ENCODE measurements at regions of chr4 and their contacts with region 1.

Region 1: DNA sequence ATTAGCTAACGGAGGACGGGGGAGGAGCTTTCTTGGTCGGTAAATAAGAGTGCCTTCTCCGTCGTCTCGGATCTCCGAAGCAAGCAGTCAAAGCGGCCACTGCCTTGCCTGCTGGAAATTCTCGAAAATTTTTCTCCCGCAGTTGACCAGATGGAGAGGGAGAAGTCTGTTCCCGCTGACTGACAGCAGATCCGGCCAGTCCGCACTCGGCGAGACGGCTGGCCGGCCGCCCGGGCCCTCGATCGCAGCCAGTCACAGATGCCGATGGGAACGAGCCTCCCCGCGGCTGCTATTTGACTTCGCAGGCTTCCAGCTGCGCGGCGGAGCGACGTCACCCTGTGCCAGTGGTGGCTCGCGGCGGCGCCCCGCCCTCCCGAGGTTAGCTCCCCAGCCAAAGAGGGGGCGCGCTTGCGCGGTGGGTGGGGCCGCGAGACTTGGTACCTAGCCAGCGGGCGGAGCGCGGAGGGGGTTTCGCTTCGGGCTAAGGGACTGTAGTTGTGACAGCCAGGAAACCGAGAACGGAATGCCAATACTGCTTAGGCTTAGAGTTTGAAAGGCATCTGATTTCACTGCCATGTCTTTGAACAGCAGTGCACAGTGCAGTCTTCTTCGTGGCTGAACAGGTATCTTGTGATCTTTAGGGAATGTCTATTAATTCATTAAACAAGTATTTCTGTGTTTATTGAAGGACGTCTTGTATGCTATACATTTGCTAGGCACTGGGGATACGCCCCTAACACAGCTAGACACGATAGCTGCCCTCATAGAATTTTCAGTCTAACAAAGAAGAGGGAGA is at the start of gene PPM1K:
- DNase-seq: peak; percentile 99
- ATAC-seq: peak; percentile 80 to 95 (median 86)
- H3K4me3 ChIP-seq: peak within 1 kb of the TSS; percentile 85
- H3K4me3 Mint-ChIP-seq: peak within 1 kb of the TSS; percentile 99
- H3K27ac ChIP-seq: peak within 1 kb of the TSS; percentile 96
- H3K27ac Mint-ChIP-seq: peak within 1 kb of the TSS; percentile 92 to 100
- H3K4me1 ChIP-seq: peaks cover 26% of the 10 kb centered on the region
- H3K4me1 Mint-ChIP-seq: peaks cover 46 to 52% of the 10 kb centered on the region in 2 donors
- H3K27me3 ChIP-seq: no peaks in the 10 kb centered on the region
- H3K27me3 Mint-ChIP-seq: no peaks in the 10 kb centered on the region
- CTCF ChIP-seq: no peak
- total RNA-seq, gene PPM1K: 68.0 to 76.8 (median 74.3) TPM

Region 2: GRCh38 chr4:87220094-87220822 is 1064.4 kb before region 1 on chr4 and contains the start of gene KLHL8:
- intact Hi-C with region 1: loop called (anchors 10 kb)
- DNase-seq: peak; percentile 85 to 93
- ATAC-seq: peak; percentile 90 to 98 (median 92)
- H3K4me3 ChIP-seq: peak within 1 kb of the TSS; percentile 98
- H3K4me3 Mint-ChIP-seq: peak within 1 kb of the TSS; percentile 94
- H3K27ac ChIP-seq: peak within 1 kb of the TSS; percentile 80
- H3K27ac Mint-ChIP-seq: peak within 1 kb of the TSS; percentile 87 to 91
- H3K4me1 ChIP-seq: peaks cover 18% of the 10 kb centered on the region
- H3K4me1 Mint-ChIP-seq: peaks cover 7 to 12% of the 10 kb centered on the region in 2 donors
- H3K27me3 ChIP-seq: no peaks in the 10 kb centered on the region
- H3K27me3 Mint-ChIP-seq: no peaks in the 10 kb centered on the region
- CTCF ChIP-seq: no peak
- total RNA-seq, gene KLHL8: 8.3 to 11.2 (median 9.1) TPM

Region 3: GRCh38 chr4:88378691-88379559 is 94.3 kb after region 1 on chr4 and contains the start of gene HERC6:
- intact Hi-C with region 1: loop called (anchors 1 kb)
- DNase-seq: peak; percentile 64 to 92
- ATAC-seq: peak; percentile 81 to 88 (median 83)
- H3K4me3 ChIP-seq: peak within 1 kb of the TSS; percentile 87
- H3K4me3 Mint-ChIP-seq: peak within 1 kb of the TSS; percentile 96
- H3K27ac ChIP-seq: peak within 1 kb of the TSS; percentile 89
- H3K27ac Mint-ChIP-seq: peak within 1 kb of the TSS; percentile 92 to 97
- H3K4me1 ChIP-seq: peaks cover 8% of the 10 kb centered on the region
- H3K4me1 Mint-ChIP-seq: peaks cover 16 to 21% of the 10 kb centered on the region in 2 donors
- H3K27me3 ChIP-seq: no peaks in the 10 kb centered on the region
- H3K27me3 Mint-ChIP-seq: no peaks in the 10 kb centered on the region
- CTCF ChIP-seq: peak; percentile 76
- total RNA-seq, gene HERC6: 8.3 to 18.0 (median 17.5) TPM

Region 4: DNA sequence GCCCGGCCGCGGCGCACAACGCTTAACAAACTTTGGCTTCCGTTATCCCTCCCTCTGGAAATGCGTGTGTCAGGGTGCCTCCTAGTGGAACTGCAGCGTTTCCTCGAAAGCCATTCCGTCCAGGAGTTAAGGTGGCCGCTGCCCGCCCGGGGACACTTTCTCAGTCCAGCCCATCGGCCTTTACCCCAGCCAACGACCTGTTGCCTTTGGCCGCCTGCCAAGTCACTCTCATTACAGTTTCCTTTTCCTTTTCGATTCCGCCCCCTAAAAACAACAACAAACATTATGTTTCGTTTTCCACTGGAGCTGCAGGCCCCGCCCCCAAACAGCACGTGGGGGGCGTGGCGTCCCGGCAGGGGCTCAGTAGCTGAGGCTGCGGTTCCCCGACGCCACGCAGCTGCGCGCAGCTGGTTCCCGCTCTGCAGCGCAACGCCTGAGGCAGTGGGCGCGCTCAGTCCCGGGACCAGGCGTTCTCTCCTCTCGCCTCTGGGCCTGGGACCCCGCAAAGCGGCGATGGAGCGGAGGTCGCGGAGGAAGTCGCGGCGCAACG is 172.2 kb after region 1 on chr4 and contains the start of gene HERC5:
- intact Hi-C with region 1: loop called (anchors 1 kb)
- DNase-seq: peak; percentile 92 to 96
- ATAC-seq: peak; percentile 91 to 98 (median 94)
- H3K4me3 ChIP-seq: peak within 1 kb of the TSS; percentile 95
- H3K4me3 Mint-ChIP-seq: peak within 1 kb of the TSS; percentile 100
- H3K27ac ChIP-seq: peak within 1 kb of the TSS; percentile 81
- H3K27ac Mint-ChIP-seq: peak within 1 kb of the TSS; percentile 95 to 97
- H3K4me1 ChIP-seq: peaks cover 11% of the 10 kb centered on the region
- H3K4me1 Mint-ChIP-seq: peaks cover 24 to 26% of the 10 kb centered on the region in 2 donors
- H3K27me3 ChIP-seq: no peaks in the 10 kb centered on the region
- H3K27me3 Mint-ChIP-seq: no peaks in the 10 kb centered on the region
- CTCF ChIP-seq: no peak
- total RNA-seq, gene HERC5: 11.0 to 19.4 (median 17.9) TPM

Region 5: GRCh38 chr4:88591787-88592599 is 307.4 kb after region 1 on chr4 and contains the start of gene HERC3:
- intact Hi-C with region 1: loop called (anchors 2 kb)
- DNase-seq: peak; percentile 91 to 93
- ATAC-seq: peak; percentile 85 to 97 (median 91)
- H3K4me3 ChIP-seq: peak within 1 kb of the TSS; percentile 100
- H3K4me3 Mint-ChIP-seq: peak within 1 kb of the TSS; percentile 96
- H3K27ac ChIP-seq: peak within 1 kb of the TSS; percentile 90
- H3K27ac Mint-ChIP-seq: peak within 1 kb of the TSS; percentile 91 to 97
- H3K4me1 ChIP-seq: peaks cover 6% of the 10 kb centered on the region
- H3K4me1 Mint-ChIP-seq: peaks cover 29 to 30% of the 10 kb centered on the region in 2 donors
- H3K27me3 ChIP-seq: no peaks in the 10 kb centered on the region
- H3K27me3 Mint-ChIP-seq: no peaks in the 10 kb centered on the region
- CTCF ChIP-seq: no peak
- total RNA-seq, gene HERC3: 59.1 to 85.0 (median 61.9) TPM

Region 6: DNA sequence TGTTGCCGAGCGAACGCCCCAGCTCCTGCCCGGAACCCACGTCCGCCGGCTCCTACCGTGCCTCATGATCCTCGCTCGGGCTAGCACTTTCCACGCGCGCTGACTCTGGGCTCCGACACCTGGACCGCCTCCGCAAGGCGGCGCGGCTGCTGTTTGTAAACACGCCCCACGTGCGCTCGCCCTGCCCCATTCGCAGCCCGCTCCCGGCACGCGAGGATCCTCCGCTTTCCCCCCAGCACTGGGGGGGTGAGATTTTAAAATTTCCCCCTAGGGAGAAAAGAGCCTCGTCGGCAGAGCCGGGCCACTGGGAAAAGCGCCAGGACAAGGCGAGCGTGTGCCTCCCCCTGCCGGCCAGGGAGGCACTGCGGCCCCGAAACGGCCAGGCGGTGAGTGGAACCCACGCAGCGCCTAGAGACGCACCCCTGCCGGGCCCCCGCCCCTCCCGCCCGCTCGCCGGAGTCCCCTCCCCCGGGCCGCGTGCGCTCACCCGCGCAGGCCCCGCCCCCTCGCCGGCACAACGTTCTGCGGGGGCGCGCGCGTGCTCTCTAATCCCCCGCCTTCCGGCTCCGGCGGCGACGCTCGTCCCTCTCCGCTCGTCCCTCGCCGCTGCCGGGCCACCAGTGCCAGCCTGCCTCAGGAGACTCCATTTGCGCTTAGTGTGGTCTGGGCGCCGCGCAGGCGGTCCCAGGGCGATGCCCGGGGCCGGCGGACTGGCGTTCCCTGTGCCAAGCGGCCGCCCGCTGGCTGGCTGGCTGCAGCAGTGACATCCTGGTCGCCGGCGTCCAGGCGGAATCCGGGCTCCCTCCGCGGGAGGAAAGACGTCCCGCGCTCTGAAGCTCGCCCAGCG is 826.6 kb after region 1 on chr4 and contains the start of gene TIGD2:
- intact Hi-C with region 1: loop called (anchors 2 kb)
- DNase-seq: peak; percentile 86 to 95
- ATAC-seq: peak; percentile 92 to 98 (median 92)
- H3K4me3 ChIP-seq: peak within 1 kb of the TSS; percentile 62
- H3K4me3 Mint-ChIP-seq: peak within 1 kb of the TSS; percentile 96
- H3K27ac ChIP-seq: peak within 1 kb of the TSS; percentile 68
- H3K27ac Mint-ChIP-seq: peak within 1 kb of the TSS; percentile 89 to 90
- H3K4me1 ChIP-seq: peaks cover 14% of the 10 kb centered on the region
- H3K4me1 Mint-ChIP-seq: peaks cover 27 to 32% of the 10 kb centered on the region in 2 donors
- H3K27me3 ChIP-seq: no peaks in the 10 kb centered on the region
- H3K27me3 Mint-ChIP-seq: peaks cover 11 to 18% of the 10 kb centered on the region in 2 donors
- CTCF ChIP-seq: peak; percentile 94
- total RNA-seq, gene TIGD2: 3.2 to 7.6 (median 5.1) TPM